Transverse colon (tissue), 4 donors: ENCODE measurements at regions of chr1 and their contacts with region 1.

Region 1: DNA sequence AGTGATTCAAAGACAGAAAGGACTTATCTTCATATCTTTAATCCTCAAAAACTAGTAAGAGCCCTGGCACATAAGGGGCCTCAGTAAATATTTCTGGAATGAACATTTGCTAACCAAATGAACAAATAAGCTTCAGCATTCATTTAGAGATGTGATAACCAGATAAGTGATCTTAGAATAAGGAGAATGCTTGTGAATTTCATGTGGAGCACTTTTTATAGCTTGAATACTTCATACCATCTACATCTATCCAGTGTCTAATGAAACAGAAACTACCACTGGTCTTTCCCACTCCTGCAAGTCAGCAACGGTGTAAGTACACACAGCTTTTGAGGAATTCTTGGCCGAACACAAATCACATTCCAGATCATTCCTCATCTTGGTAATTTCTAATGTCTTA is 38.5 kb downstream of the EDEM3 start:
- DNase-seq: no peak
- H3K4me3 ChIP-seq: no peak overlapping the region
- H3K27ac ChIP-seq: no peak overlapping the region
- H3K4me1 ChIP-seq: no peaks in the 10 kb centered on the region
- H3K27me3 ChIP-seq: no peaks in the 10 kb centered on the region
- CTCF ChIP-seq: no peak
- EP300 ChIP-seq: no peak
- POLR2A ChIP-seq: no peak

Region 2: DNA sequence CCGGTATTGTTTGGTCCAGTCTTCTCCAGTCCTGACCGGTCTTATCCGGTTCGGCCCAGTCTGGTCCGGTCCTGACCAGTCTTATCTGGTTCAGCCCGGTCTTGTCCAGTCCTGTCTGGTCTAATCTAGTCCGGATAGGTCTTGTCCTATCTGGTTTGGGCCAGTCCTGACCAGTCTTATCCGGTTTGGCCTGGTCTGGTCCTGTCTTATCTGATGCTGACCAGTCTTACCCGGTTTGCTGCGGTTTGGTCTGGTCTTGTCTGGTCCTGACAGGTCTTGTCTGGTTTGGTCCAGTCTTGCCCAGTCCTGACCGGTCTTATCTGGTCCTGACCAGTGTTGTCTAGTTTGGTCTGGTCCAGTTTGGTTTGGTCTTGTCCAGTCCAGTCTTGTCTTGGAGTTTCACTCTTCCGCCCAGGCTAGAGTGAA is 1846.9 kb before region 1 on chr1:
- in situ Hi-C with region 1: loop called in 2 of 4 experiments (anchors 25 kb)
- intact Hi-C with region 1: no loop called
- DNase-seq: no peak
- H3K4me3 ChIP-seq: no peak overlapping the region
- H3K27ac ChIP-seq: no peak overlapping the region
- H3K4me1 ChIP-seq: no peaks in the 10 kb centered on the region
- H3K27me3 ChIP-seq: no peaks in the 10 kb centered on the region
- CTCF ChIP-seq: no peak
- EP300 ChIP-seq: no peak
- POLR2A ChIP-seq: no peak

Region 3: DNA sequence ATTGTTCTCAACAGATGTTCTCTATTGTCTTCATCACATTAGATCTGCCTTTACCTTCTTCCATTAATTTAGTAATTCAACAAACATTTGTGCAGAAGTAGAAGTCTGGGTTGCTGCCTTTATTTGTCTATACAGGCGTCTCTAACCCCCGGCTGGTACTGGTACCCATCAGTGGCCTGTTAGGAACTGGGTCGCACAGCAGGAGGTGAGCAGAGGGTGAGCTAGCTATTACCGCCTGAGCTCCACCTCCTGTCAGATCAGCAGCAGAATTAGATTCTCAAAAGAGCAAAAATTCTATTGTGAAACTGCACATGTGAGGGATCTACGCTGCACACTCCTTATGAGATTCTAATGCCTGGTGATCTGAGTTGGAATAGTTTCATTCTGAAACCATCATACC is 51.4 kb after region 1 on chr1:
- in situ Hi-C with region 1: no loop called
- intact Hi-C with region 1: no loop called
- DNase-seq: no peak
- H3K4me3 ChIP-seq: no peak overlapping the region
- H3K27ac ChIP-seq: no peak overlapping the region
- H3K4me1 ChIP-seq: no peaks in the 10 kb centered on the region
- H3K27me3 ChIP-seq: no peaks in the 10 kb centered on the region
- CTCF ChIP-seq: no peak
- EP300 ChIP-seq: no peak
- POLR2A ChIP-seq: no peak

Region 4: DNA sequence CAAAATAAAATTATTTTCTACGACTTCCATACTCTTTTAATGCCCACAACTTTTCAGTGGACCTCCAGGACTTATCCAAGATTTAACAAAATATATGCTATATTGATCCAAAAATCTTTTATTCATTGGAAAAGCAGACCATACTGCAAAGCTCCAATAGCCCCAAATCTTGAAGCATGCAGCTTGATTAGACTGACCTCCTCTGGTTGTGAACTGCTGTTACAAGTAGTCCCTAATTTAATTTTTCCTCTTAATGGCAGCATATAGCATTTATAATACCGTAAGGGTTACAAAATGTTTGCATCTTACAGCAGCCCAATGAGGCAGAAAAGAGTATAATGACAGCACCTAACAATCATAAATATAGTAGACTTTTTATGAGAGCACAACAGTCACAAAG is 1609.1 kb after region 1 on chr1:
- in situ Hi-C with region 1: loop called in 1 of 4 experiments (anchors 25 kb)
- intact Hi-C with region 1: no loop called
- DNase-seq: no peak
- H3K4me3 ChIP-seq: no peak overlapping the region
- H3K27ac ChIP-seq: no peak overlapping the region
- H3K4me1 ChIP-seq: no peaks in the 10 kb centered on the region
- H3K27me3 ChIP-seq: no peaks in the 10 kb centered on the region
- CTCF ChIP-seq: peak in 1 of 5 experiments; percentile 2
- EP300 ChIP-seq: no peak
- POLR2A ChIP-seq: no peak

Region 5: DNA sequence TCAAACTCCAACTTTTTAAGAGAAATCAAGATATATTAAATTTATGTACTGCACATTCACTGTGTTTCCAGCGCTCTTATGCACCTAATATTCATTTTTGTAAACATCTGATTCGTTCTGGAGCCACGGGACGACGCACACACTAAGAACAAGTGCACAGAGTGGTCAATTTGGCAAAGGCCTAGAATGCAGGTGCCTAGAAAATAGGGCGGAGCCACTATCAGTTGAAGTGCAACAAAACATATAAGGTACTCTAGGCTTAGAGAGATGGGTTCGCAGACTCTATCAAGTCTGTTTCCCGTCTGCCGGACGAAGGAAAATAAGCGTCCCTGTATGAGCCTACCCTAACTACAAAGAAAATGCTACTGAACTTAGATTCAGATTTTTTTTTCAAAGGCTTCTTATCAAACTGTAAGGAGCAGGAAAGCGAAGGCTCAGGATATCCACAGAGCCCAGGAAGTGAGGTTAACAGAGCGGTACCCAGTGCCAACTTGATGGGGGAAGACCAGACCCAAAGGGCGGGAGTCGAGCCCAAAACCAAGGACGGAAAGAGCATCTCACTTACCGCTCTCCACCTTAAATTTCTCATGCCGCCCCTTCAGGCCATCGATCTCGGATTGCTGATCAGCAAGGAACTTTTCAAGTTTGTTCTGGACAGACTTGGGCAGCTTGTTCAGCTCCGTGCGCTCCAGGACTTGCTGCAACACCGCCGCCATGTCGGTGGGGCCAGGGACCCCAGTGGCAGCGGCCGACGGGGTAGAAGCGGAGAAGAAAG is 1658.3 kb after region 1 on chr1:
- in situ Hi-C with region 1: loop called in 2 of 4 experiments (anchors 25 kb)
- intact Hi-C with region 1: no loop called
- DNase-seq: peak; percentile 34
- H3K4me3 ChIP-seq: peak overlapping the region; percentile 66 to 99 (median 94)
- H3K27ac ChIP-seq: peak overlapping the region; percentile 92 to 99 (median 96)
- H3K4me1 ChIP-seq: peaks cover 14 to 28% (median 20%) of the 10 kb centered on the region in 4 donors
- H3K27me3 ChIP-seq: no peaks in the 10 kb centered on the region
- CTCF ChIP-seq: no peak
- EP300 ChIP-seq: no peak
- POLR2A ChIP-seq: no peak